ENCODE measurements at regions of chr19 and their contacts with region 1.

Region 1: GRCh38 chr19:14073261-14073924 is 807 bp downstream of the MISP3 start:
- DNase-seq: peak; percentile 75
- H3K4me3 Mint-ChIP-seq: peak overlapping the region; percentile 80
- H3K27ac Mint-ChIP-seq: no peak overlapping the region
- H3K4me1 Mint-ChIP-seq: peaks cover 10% of the 10 kb centered on the region
- H3K27me3 Mint-ChIP-seq: peaks cover 4% of the 10 kb centered on the region

Region 2: DNA sequence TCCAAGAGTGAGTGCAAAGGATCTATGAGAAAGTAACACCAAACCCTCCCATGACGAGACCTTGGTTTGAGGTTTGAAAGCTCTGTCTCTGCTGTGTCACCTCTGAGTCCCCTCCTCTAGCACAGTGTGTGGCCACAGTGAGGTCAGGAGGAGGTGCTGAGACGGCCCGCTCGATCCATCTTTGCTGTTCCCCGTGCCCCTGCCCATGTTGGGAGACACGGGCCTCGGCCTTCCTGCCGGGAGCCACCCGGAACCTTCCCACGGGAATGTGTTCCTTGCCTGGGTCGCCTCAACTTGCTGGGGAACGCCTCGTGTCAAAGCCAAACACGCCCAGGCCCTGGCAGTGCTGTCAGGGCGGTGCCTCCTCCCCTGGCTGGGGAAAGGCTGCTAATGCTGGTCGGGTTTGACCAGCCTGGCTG is 186.4 kb before region 1 on chr19:
- CTCF ChIA-PET with region 1: interaction called, 10 read pairs
- intact Hi-C with region 1: no loop called
- DNase-seq: no peak
- H3K4me3 Mint-ChIP-seq: no peak overlapping the region
- H3K27ac Mint-ChIP-seq: no peak overlapping the region
- H3K4me1 Mint-ChIP-seq: peaks cover 10% of the 10 kb centered on the region
- H3K27me3 Mint-ChIP-seq: no peaks in the 10 kb centered on the region

Region 3: DNA sequence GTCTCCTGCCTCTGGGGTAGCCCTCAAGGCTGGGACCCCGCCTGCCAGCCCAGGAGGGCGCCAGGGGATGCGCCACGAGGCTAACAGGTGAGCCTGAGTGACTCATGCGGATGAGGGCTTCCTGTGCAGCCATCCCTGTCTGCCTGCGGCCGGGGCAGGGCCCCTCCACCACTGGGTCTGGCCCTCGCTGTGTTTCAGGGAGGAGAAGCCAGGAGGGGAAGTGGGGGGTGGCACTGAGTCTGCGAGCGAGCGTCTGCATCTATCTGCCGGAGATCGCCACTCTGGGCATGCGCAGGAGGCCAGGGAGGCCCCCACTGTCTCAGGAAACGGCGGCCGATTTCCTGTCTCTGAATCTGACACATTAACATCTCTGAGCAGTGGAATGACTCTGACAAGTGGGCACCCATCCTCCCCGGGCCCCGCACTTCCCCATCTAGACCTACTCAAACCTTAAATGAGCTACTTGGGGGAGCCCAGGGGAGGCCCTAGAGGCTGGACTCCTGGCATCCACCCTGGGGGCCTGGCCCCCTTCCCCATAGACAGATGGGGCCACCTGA is 87.0 kb before region 1 on chr19:
- CTCF ChIA-PET with region 1: interaction called, 4 read pairs
- intact Hi-C with region 1: loop called (anchors 2 kb)
- DNase-seq: peak; percentile 100
- H3K4me3 Mint-ChIP-seq: peak overlapping the region; percentile 65
- H3K27ac Mint-ChIP-seq: peak overlapping the region; percentile 98
- H3K4me1 Mint-ChIP-seq: peaks cover 64% of the 10 kb centered on the region
- H3K27me3 Mint-ChIP-seq: no peaks in the 10 kb centered on the region

Region 4: GRCh38 chr19:14059093-14059480 is 14.3 kb before region 1 on chr19:
- CTCF ChIA-PET with region 1: interaction called, 55 read pairs
- intact Hi-C with region 1: no loop called
- DNase-seq: peak; percentile 53
- H3K4me3 Mint-ChIP-seq: no peak overlapping the region
- H3K27ac Mint-ChIP-seq: no peak overlapping the region
- H3K4me1 Mint-ChIP-seq: peaks cover 17% of the 10 kb centered on the region
- H3K27me3 Mint-ChIP-seq: peaks cover 37% of the 10 kb centered on the region

Region 5: DNA sequence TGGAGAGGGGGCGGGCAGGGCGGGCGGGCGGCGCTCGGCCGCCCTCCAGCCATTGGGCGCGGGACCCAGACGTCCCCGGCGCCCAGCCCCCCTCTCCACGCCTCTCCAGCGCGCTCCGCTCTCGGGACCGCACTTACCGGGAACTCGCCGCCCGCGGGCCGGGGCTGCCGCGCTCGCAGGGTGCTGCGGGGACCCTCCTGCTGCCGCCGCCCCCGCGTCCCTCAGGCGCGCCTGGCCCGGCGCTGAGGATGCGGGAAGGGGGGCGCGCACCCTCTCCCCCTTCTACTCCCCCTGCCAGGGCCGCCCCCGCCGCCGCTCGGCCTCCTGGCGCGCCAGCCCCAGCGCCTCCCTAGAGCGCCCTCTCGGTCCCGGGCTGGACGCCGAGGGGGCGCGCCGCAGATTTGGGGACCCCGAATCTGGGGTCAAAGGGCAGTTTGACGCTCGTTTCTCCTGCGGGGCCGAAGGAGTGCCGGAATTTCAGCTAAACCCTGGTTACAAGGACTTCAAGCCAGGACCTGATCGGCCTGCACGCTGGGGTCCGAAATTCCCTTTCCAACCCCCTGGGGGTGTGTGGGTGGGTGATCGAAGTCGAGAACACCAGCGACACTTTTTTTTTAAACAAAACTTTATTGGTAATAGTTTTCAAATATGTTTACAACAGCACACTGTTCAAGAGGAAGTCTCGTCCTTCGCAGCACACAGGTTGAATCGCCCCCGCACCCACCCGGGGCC is 17.9 kb after region 1 on chr19:
- CTCF ChIA-PET with region 1: interaction called, 5 read pairs
- intact Hi-C with region 1: loop called (anchors 1 kb)
- DNase-seq: peak; percentile 78
- H3K4me3 Mint-ChIP-seq: peak overlapping the region; percentile 96
- H3K27ac Mint-ChIP-seq: peak overlapping the region; percentile 97
- H3K4me1 Mint-ChIP-seq: peaks cover 24% of the 10 kb centered on the region
- H3K27me3 Mint-ChIP-seq: no peaks in the 10 kb centered on the region

Region 6: GRCh38 chr19:14117668-14118164 is 44.3 kb after region 1 on chr19 and contains the start of gene PRKACA:
- CTCF ChIA-PET with region 1: interaction called, 5 read pairs
- intact Hi-C with region 1: loop called (anchors 2 kb)
- DNase-seq: peak; percentile 99
- H3K4me3 Mint-ChIP-seq: peak within 1 kb of the TSS; percentile 86
- H3K27ac Mint-ChIP-seq: peak within 1 kb of the TSS; percentile 78
- H3K4me1 Mint-ChIP-seq: peaks cover 43% of the 10 kb centered on the region
- H3K27me3 Mint-ChIP-seq: no peaks in the 10 kb centered on the region
- total RNA-seq, gene PRKACA: 48.2 to 60.0 TPM